Activated CD4-positive, alpha-beta T cell treated with anti-CD3 and anti-CD28 coated beads, Interleukin-2, amount 10 ng/mL, durations not matched to agents 7 days and 5 days (primary cell): ENCODE measurements at regions of chr2 and their contacts with region 1.

Region 1: DNA sequence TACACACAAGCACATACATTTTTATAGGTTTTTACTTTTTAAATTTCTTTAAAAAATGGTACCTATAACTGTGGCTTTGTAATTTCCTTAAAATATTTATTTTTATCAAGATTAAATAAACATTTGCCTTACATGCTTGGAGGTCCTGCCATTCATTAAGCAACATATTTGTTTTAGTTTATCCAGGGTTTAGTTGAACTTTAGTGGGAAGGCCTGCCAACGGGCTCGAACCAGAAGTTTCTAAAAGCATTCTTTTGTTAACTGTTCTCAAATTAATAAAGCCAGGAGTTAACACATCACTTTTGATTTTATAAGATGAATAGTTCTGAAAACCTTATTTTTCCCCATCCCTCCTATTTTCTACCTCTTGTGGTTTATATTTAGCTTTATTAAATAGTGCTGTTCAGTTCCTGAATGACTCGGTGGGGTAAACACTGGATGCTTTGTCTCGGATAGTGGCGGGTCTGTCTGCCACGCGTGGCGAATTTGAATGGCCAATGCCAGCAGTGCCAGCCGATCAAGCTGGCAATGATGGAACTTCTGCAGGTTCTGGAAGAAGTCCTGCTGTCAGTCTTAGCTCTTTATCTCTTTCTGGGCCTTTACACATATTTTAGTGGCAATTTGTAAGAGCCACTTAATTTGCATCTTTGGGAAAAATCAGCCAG is 32.2 kb downstream of the SH3YL1 start:
- DNase-seq: no peak
- H3K4me3 Mint-ChIP-seq: no peak overlapping the region
- H3K27ac Mint-ChIP-seq: no peak overlapping the region
- H3K4me1 Mint-ChIP-seq: no peaks in the 10 kb centered on the region
- H3K27me3 Mint-ChIP-seq: no peaks in the 10 kb centered on the region

Region 2: DNA sequence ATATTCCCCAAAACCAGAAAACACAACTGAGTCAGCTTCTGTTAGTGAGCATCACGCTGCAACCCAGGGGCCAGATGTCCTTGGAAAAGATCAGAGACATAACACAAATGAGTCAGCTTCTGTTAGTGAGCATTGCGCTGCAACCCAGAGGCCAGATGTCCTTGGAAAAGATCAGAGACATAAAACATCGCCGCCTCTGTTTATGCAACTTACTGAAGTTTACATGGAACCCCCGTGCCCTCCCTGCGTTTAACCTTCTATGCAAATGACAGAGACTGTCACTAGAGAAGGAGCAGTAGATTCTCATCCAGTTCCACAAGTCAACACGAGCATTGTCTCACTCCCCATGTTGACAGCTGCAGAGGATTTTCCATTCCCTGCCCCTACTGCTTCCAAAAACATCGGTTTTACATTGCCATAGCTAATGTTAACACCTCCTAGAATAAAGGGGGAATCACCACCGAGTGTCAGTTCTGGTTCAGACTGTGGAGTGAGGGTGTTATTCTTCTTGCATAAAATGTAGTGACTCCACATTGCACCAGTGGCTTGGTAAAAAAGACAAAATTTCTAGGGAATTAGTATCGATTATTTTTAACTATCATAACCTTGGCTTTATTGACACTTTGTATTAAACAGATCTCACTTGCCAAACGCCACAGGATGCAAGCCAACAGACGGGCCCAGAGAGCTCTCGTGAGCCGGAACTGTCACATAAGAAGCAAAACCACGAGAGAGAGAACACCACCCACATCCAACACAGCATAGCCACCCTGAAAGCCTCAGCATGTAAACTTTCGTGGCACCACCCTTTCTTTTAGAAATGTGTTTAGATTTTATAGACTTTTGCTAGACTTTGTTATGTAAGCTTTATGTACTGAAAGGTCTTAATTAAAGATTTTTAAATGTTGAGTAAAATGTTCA is 55.5 kb before region 1 on chr2:
- CTCF ChIA-PET with region 1: no interaction called
- POLR2A ChIA-PET with region 1: interaction called, 10 read pairs
- DNase-seq: peak; percentile 76
- H3K4me3 Mint-ChIP-seq: peak overlapping the region; percentile 33
- H3K27ac Mint-ChIP-seq: peak overlapping the region; percentile 84
- H3K4me1 Mint-ChIP-seq: peaks cover 33% of the 10 kb centered on the region
- H3K27me3 Mint-ChIP-seq: peaks cover 7% of the 10 kb centered on the region

Region 3: GRCh38 chr2:419687-420317 is 188.1 kb after region 1 on chr2:
- CTCF ChIA-PET with region 1: no interaction called
- POLR2A ChIA-PET with region 1: no interaction called
- DNase-seq: no peak
- H3K4me3 Mint-ChIP-seq: no peak overlapping the region
- H3K27ac Mint-ChIP-seq: no peak overlapping the region
- H3K4me1 Mint-ChIP-seq: peaks cover 3% of the 10 kb centered on the region
- H3K27me3 Mint-ChIP-seq: peaks cover 12% of the 10 kb centered on the region